ENCODE measurements at regions of chr5 and their contacts with region 1.

Region 1: GRCh38 chr5:121949867-121950266 is 11.9 kb upstream of the SRFBP1 start:
- H3K4me3 ChIP-seq: no peak overlapping the region
- H3K27ac ChIP-seq: no peak overlapping the region
- H3K4me1 ChIP-seq: no peaks in the 10 kb centered on the region
- CTCF ChIP-seq: peak; percentile 28; the same call in 1 of the 2 replicates

Region 2: GRCh38 chr5:121962347-121962670 is 12.4 kb after region 1 on chr5:
- CTCF ChIA-PET with region 1: interaction called, 18 read pairs
- POLR2A ChIA-PET with region 1: no interaction called
- H3K4me3 ChIP-seq: peak overlapping the region; percentile 94
- H3K27ac ChIP-seq: peak overlapping the region; percentile 63; the same call in 1 of the 2 replicates
- H3K4me1 ChIP-seq: peaks cover 6% of the 10 kb centered on the region; the same call in 1 of the 2 replicates
- CTCF ChIP-seq: no peak

Measured in HEK293 (cell line).